Panc1 (cell line): ENCODE measurements at regions of chr4 and their contacts with region 1.

Region 1: GRCh38 chr4:121900132-121900983 is 30.1 kb upstream of the BBS7 start:
- DNase-seq: peak; percentile 24
- ATAC-seq: peak; percentile 90
- H3K4me3 ChIP-seq: no peak overlapping the region
- H3K27ac ChIP-seq: no peak overlapping the region
- H3K4me1 ChIP-seq: no peaks in the 10 kb centered on the region
- H3K27me3 ChIP-seq: no peaks in the 10 kb centered on the region; the same call in none of the 2 replicates
- CTCF ChIP-seq: peak; percentile 75

Region 2: DNA sequence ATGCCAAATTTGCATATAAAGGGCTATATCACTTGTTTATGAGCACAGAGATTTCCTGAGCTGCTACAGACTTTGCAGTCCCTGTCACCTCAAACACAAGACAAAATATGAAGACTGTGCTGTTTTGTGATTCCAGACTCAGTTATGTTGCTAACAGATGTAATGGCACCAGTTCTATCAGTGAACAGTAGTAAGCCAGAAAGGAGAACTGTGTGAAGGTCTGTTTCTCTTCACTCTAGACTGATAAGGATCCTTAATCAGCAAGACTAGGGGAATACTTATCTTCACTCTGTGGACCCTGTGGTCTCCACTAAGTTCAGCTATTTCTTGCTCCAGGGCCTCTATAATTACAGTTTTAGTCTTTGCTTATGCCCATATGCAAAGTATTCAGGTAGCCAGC is 286.3 kb before region 1 on chr4:
- CTCF ChIA-PET with region 1: no interaction called
- POLR2A ChIA-PET with region 1: no interaction called
- in situ Hi-C with region 1: no loop called
- intact Hi-C with region 1: no loop called
- DNase-seq: no peak
- ATAC-seq: no peak
- H3K4me3 ChIP-seq: no peak overlapping the region
- H3K27ac ChIP-seq: no peak overlapping the region
- H3K4me1 ChIP-seq: no peaks in the 10 kb centered on the region
- H3K27me3 ChIP-seq: no peaks in the 10 kb centered on the region
- CTCF ChIP-seq: no peak

Region 3: GRCh38 chr4:122003335-122003734 is 103.0 kb after region 1 on chr4:
- CTCF ChIA-PET with region 1: no interaction called
- POLR2A ChIA-PET with region 1: no interaction called
- in situ Hi-C with region 1: no loop called
- intact Hi-C with region 1: loop called (anchors 2 kb)
- DNase-seq: peak; percentile 8
- ATAC-seq: peak; percentile 65; the same call in 1 of the 2 replicates
- H3K4me3 ChIP-seq: no peak overlapping the region
- H3K27ac ChIP-seq: no peak overlapping the region
- H3K4me1 ChIP-seq: no peaks in the 10 kb centered on the region
- H3K27me3 ChIP-seq: peaks cover 7% of the 10 kb centered on the region
- CTCF ChIP-seq: peak; percentile 59

Region 4: GRCh38 chr4:122577808-122578781 is 677.7 kb after region 1 on chr4:
- CTCF ChIA-PET with region 1: no interaction called
- POLR2A ChIA-PET with region 1: no interaction called
- in situ Hi-C with region 1: no loop called
- intact Hi-C with region 1: loop called (anchors 5 kb)
- DNase-seq: no peak
- ATAC-seq: peak; percentile 75; the same call in 1 of the 2 replicates
- H3K4me3 ChIP-seq: no peak overlapping the region
- H3K27ac ChIP-seq: no peak overlapping the region
- H3K4me1 ChIP-seq: no peaks in the 10 kb centered on the region
- H3K27me3 ChIP-seq: no peaks in the 10 kb centered on the region
- CTCF ChIP-seq: peak; percentile 64; the same call in 1 of the 2 replicates